Thyroid gland (tissue), 4 donors: ENCODE measurements at regions of chr11 and their contacts with region 1.

Region 1: DNA sequence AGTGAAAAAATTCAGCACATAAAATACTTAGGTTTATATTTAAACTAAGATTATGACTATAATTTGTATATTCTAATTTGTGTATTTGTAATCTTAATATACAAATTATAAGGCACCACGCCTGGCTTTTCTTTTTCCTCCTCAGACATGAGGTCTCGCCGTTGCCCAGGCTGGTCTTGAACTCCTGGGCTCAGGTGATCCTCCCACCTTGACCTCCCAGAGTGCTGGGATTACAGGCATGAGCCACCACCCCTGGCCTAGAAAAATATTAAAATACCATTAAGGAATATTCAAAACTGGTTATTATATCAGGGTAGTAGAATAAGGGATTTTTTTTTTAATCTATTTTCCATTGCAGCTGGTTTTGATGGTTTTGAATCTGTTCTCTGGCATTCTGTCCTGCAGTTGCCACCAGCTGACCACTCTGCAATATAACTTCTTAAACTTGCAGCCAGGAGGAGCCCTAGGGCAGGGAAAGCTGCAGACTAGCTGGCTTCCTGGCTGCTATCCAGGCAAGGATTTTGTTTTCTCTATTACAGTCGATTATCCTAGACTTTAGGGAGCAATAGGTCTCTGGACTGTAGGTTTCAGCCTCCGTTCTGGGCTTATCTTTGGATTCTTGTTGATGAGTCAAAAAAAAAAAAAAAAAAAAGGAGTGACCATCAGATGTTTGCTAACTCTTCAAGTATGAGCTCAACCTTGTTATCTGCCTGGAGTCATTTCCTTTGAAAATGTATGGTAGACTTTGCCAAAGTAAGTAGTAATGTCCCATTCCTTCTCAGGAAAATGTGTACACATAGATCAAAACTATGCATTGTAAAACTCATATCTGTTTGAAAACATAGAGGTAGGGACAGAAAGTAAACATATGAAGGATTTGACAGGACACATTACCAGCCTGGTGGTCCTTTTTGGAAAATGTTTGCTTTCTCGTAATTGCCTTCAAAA is 13.2 kb downstream of the POLA2 start:
- DNase-seq: peak; percentile 83
- H3K4me3 ChIP-seq: no peak overlapping the region
- H3K27ac ChIP-seq: peak overlapping the region in 1 of 3 donors; percentile 2
- H3K4me1 ChIP-seq: peaks cover 4 to 10% of the 10 kb centered on the region in 2 donors
- H3K27me3 ChIP-seq: no peaks in the 10 kb centered on the region
- CTCF ChIP-seq: peak in 5 of 6 experiments; percentile 36 to 98 (median 96)
- POLR2A ChIP-seq: no peak

Region 2: GRCh38 chr11:65317074-65317786 is 42.2 kb after region 1 on chr11:
- intact Hi-C with region 1: loop called (anchors 2 kb)
- DNase-seq: peak; percentile 93 to 95
- H3K4me3 ChIP-seq: peak overlapping the region in 1 of 3 donors; percentile 2
- H3K27ac ChIP-seq: peak overlapping the region; percentile 79 to 91 (median 84)
- H3K4me1 ChIP-seq: peaks cover 22 to 47% of the 10 kb centered on the region in 2 donors
- H3K27me3 ChIP-seq: no peaks in the 10 kb centered on the region
- CTCF ChIP-seq: no peak
- POLR2A ChIP-seq: peak in 1 of 2 donors; percentile 29

Region 3: GRCh38 chr11:65382033-65382807 is 107.2 kb after region 1 on chr11 and contains the start of gene SLC25A45:
- intact Hi-C with region 1: no loop called
- DNase-seq: peak; percentile 88 to 90
- H3K4me3 ChIP-seq: peak within 1 kb of the TSS in 1 of 3 donors; percentile 25
- H3K27ac ChIP-seq: peak within 1 kb of the TSS; percentile 82 to 98 (median 93)
- H3K4me1 ChIP-seq: peaks cover 23 to 58% of the 10 kb centered on the region in 2 donors
- H3K27me3 ChIP-seq: no peaks in the 10 kb centered on the region
- CTCF ChIP-seq: peak; percentile 72 to 89 (median 78)
- POLR2A ChIP-seq: peak in 1 of 2 donors; percentile 84
- total RNA-seq, gene SLC25A45: 13.0 to 28.0 (median 20.9) TPM

Region 4: GRCh38 chr11:65524741-65525545 is 249.9 kb after region 1 on chr11 and contains the start of gene SCYL1:
- intact Hi-C with region 1: loop called (anchors 10 kb)
- DNase-seq: peak; percentile 71 to 74
- H3K4me3 ChIP-seq: peak within 1 kb of the TSS; percentile 96 to 99 (median 99)
- H3K27ac ChIP-seq: peak within 1 kb of the TSS; percentile 81 to 89 (median 86)
- H3K4me1 ChIP-seq: peaks cover 32 to 39% of the 10 kb centered on the region in 2 donors
- H3K27me3 ChIP-seq: no peaks in the 10 kb centered on the region
- CTCF ChIP-seq: no peak
- POLR2A ChIP-seq: peak in 1 of 2 donors; percentile 52
- total RNA-seq, gene SCYL1: 99.8 to 122 (median 116) TPM